CD4-positive, alpha-beta T cell (primary cell): ENCODE measurements at regions of chr4 and their contacts with region 1.

Region 1: GRCh38 chr4:674172-675035 is at the starts of genes ATP5ME and MYL5:
- DNase-seq: peak; percentile 96 to 99 (median 97)
- ATAC-seq: peak; percentile 91
- H3K4me3 ChIP-seq: peak within 1 kb of the TSS; percentile 88
- H3K4me3 Mint-ChIP-seq: peak within 1 kb of the TSS; percentile 96
- H3K27ac ChIP-seq: peak within 1 kb of the TSS; percentile 85 to 98
- H3K27ac Mint-ChIP-seq: peak within 1 kb of the TSS; percentile 87
- H3K4me1 ChIP-seq: peaks cover 21% of the 10 kb centered on the region
- H3K4me1 Mint-ChIP-seq: peaks cover 4% of the 10 kb centered on the region
- H3K27me3 ChIP-seq: no peaks in the 10 kb centered on the region
- H3K27me3 Mint-ChIP-seq: no peaks in the 10 kb centered on the region
- CTCF ChIP-seq: peak; percentile 90
- total RNA-seq, gene ATP5ME: 109 to 126 TPM
- total RNA-seq, gene MYL5: 25.3 to 29.2 TPM

Region 2: DNA sequence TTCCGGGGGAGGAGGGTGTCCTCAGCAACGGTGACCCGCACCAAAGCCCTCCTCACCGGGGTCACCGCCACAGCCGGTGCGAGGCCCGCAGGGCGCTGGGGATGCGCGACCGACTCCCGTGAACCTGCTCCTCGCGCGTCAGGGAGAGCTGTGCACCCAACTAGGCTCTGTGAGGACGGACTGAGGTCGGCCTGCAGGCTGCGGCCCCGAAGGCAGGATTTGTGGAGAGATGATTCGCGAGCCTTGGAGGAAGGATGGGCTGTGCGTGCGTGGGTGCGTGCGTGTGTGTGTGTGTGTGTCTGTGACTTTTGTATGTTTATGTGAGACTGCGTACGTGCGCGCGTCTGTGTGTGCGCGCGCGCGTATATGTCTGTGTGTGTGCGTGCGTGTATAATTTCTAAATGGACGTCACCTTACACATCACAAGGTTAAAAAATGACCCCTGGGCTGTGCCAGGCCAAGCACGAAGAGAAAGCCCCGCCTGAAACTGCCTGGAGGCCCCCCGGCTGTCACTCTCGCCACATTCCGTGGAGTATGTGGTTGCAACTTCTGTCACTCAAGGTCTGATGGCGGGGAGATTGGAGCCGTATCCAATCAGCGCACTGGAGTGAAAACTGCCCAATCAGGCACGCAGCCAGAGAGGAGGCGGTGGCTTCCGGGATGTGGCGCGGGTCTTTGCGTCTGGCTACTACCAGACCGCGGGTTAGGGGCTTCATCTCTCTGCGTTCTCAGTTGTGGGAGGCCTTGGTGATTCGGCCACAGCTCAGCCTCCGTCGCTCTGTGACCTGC is 337.1 kb before region 1 on chr4 and contains the start of gene ZNF141:
- CTCF ChIA-PET with region 1: no interaction called
- POLR2A ChIA-PET with region 1: interaction called, 11 read pairs
- intact Hi-C with region 1: loop called in 1 of 2 experiments (anchors 5 kb)
- DNase-seq: peak; percentile 81 to 97 (median 87)
- ATAC-seq: peak; percentile 87
- H3K4me3 ChIP-seq: peak within 1 kb of the TSS; percentile 98
- H3K4me3 Mint-ChIP-seq: peak within 1 kb of the TSS; percentile 94
- H3K27ac ChIP-seq: peak within 1 kb of the TSS; percentile 85 to 91
- H3K27ac Mint-ChIP-seq: peak within 1 kb of the TSS; percentile 98
- H3K4me1 ChIP-seq: peaks cover 27% of the 10 kb centered on the region
- H3K4me1 Mint-ChIP-seq: peaks cover 51% of the 10 kb centered on the region
- H3K27me3 ChIP-seq: no peaks in the 10 kb centered on the region
- H3K27me3 Mint-ChIP-seq: no peaks in the 10 kb centered on the region
- CTCF ChIP-seq: no peak
- total RNA-seq, gene ZNF141: 13.6 to 13.7 TPM

Region 3: DNA sequence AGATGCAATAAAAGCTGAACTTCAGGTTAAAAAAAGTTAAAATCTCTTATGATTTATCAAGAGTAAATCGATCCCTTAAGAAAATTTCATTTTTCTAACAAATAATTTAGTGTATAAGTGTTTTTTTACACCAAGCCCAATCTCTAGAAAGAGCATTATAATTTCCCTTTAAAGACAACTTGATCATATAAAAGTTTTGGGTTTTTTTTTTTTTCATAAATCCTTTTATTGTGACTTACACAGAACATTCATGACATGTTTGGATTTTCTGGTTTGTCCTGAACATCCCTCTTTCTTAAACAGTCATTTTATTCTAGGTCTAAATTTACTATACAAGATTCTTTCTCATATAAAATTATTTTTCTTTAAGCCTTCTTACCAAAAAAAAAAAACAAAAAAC is 182.0 kb before region 1 on chr4:
- CTCF ChIA-PET with region 1: no interaction called
- POLR2A ChIA-PET with region 1: no interaction called
- intact Hi-C with region 1: no loop called
- DNase-seq: no peak
- ATAC-seq: no peak
- H3K4me3 ChIP-seq: no peak overlapping the region
- H3K4me3 Mint-ChIP-seq: no peak overlapping the region
- H3K27ac ChIP-seq: no peak overlapping the region
- H3K27ac Mint-ChIP-seq: no peak overlapping the region
- H3K4me1 ChIP-seq: peaks cover 6% of the 10 kb centered on the region
- H3K4me1 Mint-ChIP-seq: peaks cover 5% of the 10 kb centered on the region
- H3K27me3 ChIP-seq: no peaks in the 10 kb centered on the region
- H3K27me3 Mint-ChIP-seq: no peaks in the 10 kb centered on the region
- CTCF ChIP-seq: no peak

Region 4: DNA sequence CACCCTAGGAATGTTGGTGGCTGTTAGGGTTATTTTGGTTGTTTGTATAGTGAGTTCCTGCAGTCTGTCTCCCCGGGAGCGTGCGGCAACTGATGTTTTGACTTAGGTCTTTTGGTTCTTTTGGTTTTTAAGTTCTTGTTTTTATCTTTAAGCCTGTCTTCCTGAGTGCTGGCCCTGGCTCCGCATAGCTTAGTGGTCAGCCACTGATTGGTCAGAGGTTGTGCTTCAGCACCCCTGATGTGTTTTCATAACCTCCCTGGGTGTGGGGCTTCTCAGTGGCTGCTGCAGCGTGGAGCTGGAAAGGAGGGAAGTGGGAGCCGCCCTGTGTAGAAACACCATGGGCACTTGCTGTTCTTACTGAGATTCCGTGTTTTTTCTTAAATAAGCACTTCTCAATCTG is 170.3 kb before region 1 on chr4:
- CTCF ChIA-PET with region 1: no interaction called
- POLR2A ChIA-PET with region 1: no interaction called
- intact Hi-C with region 1: loop called in 1 of 2 experiments (anchors 5 kb)
- DNase-seq: no peak
- ATAC-seq: no peak
- H3K4me3 ChIP-seq: no peak overlapping the region
- H3K4me3 Mint-ChIP-seq: no peak overlapping the region
- H3K27ac ChIP-seq: no peak overlapping the region
- H3K27ac Mint-ChIP-seq: no peak overlapping the region
- H3K4me1 ChIP-seq: peaks cover 31% of the 10 kb centered on the region
- H3K4me1 Mint-ChIP-seq: peaks cover 58% of the 10 kb centered on the region
- H3K27me3 ChIP-seq: no peaks in the 10 kb centered on the region
- H3K27me3 Mint-ChIP-seq: no peaks in the 10 kb centered on the region
- CTCF ChIP-seq: no peak

Region 5: DNA sequence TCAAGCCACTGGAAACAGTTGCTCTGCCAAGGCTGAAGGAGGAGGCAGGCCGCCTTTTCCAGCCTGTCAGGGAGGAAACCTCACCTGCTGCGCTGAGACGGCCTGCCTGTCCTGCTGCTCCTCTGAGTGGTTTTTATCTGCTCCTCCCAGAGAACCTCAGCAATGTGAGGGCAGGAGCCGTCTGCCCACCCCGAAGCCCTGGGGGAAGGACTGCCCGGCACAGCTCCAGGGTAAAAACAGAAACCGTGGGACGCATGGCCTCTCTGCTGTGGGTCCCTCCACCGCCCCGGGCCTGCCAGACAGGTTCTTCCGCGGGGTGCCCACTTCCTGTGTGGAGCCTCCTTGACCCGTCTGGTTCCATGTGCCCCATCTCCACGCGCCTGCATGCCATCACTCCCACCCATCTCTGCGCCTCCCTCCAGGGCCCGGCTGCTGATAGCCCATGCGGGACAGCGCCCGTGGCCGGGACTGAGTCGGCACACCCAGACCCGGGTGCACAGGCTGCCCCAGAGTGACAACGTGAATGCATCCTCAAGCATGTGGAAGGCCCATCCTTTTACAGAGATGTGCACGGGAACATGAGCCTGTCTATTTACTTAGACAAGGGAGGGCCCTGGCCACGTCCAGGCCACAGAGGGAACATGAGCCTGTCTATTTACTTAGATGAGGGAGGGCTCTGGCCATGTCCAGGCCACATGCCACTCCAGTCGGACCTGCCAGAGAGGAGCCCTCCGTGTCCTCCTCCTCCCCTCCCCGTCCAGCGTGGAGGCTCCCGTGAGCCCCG is 18.6 kb after region 1 on chr4:
- CTCF ChIA-PET with region 1: no interaction called
- POLR2A ChIA-PET with region 1: no interaction called
- intact Hi-C with region 1: no loop called
- DNase-seq: no peak
- ATAC-seq: no peak
- H3K4me3 ChIP-seq: no peak overlapping the region
- H3K4me3 Mint-ChIP-seq: no peak overlapping the region
- H3K27ac ChIP-seq: no peak overlapping the region
- H3K27ac Mint-ChIP-seq: no peak overlapping the region
- H3K4me1 ChIP-seq: peaks cover 9% of the 10 kb centered on the region
- H3K4me1 Mint-ChIP-seq: no peaks in the 10 kb centered on the region
- H3K27me3 ChIP-seq: peaks cover 5 to 15% of the 10 kb centered on the region in 2 experiments
- H3K27me3 Mint-ChIP-seq: peaks cover 18% of the 10 kb centered on the region
- CTCF ChIP-seq: no peak

Region 6: DNA sequence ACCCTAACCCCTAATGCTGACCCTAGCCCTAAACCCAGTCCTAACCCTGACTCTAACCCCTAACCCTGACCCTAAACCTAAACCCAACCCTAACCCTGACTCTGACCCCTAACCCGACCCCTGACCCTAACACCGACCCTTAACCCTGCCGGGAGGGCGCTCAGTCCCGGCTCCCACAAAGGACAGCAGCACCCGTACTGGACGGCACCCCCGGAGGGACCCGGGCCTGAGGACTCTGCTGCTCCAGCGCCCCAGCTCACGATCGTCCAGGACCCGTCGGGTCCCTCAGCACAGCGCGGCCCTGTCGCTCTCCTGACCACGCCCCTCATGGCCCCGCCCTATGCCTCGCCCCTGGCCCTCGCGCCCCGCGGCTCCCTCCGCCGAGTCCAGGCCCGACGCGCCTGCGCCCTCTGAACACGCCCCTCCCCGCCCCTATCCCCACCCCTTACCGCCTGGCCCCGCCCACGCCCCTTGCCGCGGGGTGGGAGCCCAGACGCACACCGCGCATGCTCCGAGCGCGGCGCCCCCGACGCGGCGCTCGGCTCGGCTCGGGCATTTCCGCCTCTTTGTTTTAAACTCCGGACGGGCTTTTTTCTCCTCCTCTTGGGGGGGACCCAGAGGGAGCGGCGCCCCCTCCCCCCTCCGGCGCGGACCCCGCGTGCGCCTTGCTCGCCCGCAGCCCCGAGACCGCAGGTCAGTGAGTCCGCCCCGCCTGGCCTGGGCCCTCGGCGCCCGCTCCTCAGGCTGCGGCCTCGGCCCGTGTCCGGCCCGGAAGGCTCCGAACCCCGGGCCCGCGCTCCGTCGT is 31.1 kb after region 1 on chr4 and contains the start of gene PCGF3:
- CTCF ChIA-PET with region 1: no interaction called
- POLR2A ChIA-PET with region 1: interaction called, 3 read pairs
- intact Hi-C with region 1: loop called (anchors 1 to 2 kb)
- DNase-seq: peak; percentile 93 to 99 (median 96)
- ATAC-seq: peak; percentile 95
- H3K4me3 ChIP-seq: peak within 1 kb of the TSS; percentile 77
- H3K4me3 Mint-ChIP-seq: peak within 1 kb of the TSS; percentile 90
- H3K27ac ChIP-seq: peak within 1 kb of the TSS; percentile 58 to 68
- H3K27ac Mint-ChIP-seq: peak within 1 kb of the TSS; percentile 69
- H3K4me1 ChIP-seq: peaks cover 36% of the 10 kb centered on the region
- H3K4me1 Mint-ChIP-seq: peaks cover 25% of the 10 kb centered on the region
- H3K27me3 ChIP-seq: no peaks in the 10 kb centered on the region
- H3K27me3 Mint-ChIP-seq: no peaks in the 10 kb centered on the region
- CTCF ChIP-seq: no peak
- total RNA-seq, gene PCGF3: 45.1 to 48.6 TPM

Region 7: GRCh38 chr4:931960-932712 is 257.7 kb after region 1 on chr4 and contains the starts of genes GAK and TMEM175:
- CTCF ChIA-PET with region 1: no interaction called
- POLR2A ChIA-PET with region 1: interaction called, 7 read pairs
- intact Hi-C with region 1: loop called in 1 of 2 experiments (anchors 5 kb)
- DNase-seq: peak; percentile 91 to 99 (median 96)
- ATAC-seq: peak; percentile 90
- H3K4me3 ChIP-seq: peak within 1 kb of the TSS; percentile 97
- H3K4me3 Mint-ChIP-seq: peak within 1 kb of the TSS; percentile 98
- H3K27ac ChIP-seq: peak within 1 kb of the TSS; percentile 75 to 89
- H3K27ac Mint-ChIP-seq: peak within 1 kb of the TSS; percentile 98
- H3K4me1 ChIP-seq: peaks cover 43% of the 10 kb centered on the region
- H3K4me1 Mint-ChIP-seq: peaks cover 42% of the 10 kb centered on the region
- H3K27me3 ChIP-seq: no peaks in the 10 kb centered on the region
- H3K27me3 Mint-ChIP-seq: no peaks in the 10 kb centered on the region
- CTCF ChIP-seq: no peak
- total RNA-seq, gene GAK: 130 to 131 TPM
- total RNA-seq, gene TMEM175: 51.3 to 57.7 TPM

Region 8: DNA sequence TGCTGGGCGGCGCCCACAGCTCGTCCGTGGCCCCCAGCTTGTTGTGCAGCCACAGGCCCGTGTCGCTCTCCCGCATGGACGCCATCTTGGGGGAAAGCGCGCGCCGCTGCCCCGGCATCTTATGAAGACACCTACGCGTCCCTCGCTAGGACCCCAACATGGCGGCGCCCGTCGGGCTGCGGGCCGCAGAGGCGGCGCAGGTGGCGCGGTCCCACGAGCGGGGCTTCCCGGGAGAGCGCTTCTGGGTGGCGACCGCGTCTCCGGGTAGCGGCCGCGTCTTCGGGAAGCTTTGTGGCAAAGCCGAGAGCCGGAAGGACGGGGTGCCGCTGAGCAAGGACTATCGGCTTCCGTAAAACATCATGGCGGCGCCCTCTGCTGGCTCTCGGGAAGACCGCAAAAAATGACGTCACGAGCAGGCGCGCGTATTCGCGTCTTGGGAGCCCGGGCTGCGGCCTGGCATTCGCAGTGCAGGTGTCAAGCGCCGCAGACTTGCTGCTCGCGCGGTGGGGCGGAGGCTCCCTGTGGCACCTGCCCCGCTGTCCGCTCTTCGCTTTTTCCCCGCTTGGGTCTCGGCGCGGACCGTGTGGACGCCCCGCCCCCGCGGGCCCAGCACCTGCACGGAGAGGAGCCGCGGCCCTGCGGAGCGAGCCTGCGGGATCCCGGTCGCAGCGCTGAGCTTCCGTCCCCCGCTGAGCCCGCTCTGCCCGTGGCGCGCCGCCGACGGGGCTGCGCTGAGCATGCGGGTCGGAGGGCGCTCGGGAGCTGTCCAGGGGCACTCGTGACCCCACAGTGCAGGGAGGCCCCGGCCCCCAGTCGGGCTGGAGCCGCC is 1334.7 kb after region 1 on chr4 and contains the start of gene NELFA:
- CTCF ChIA-PET with region 1: no interaction called
- POLR2A ChIA-PET with region 1: no interaction called
- intact Hi-C with region 1: loop called in 1 of 2 experiments (anchors 10 kb)
- DNase-seq: peak; percentile 93 to 98 (median 95)
- ATAC-seq: peak; percentile 79
- H3K4me3 ChIP-seq: peak within 1 kb of the TSS; percentile 87
- H3K4me3 Mint-ChIP-seq: peak within 1 kb of the TSS; percentile 98
- H3K27ac ChIP-seq: peak within 1 kb of the TSS; percentile 97 to 99
- H3K27ac Mint-ChIP-seq: peak within 1 kb of the TSS; percentile 95
- H3K4me1 ChIP-seq: peaks cover 31% of the 10 kb centered on the region
- H3K4me1 Mint-ChIP-seq: peaks cover 39% of the 10 kb centered on the region
- H3K27me3 ChIP-seq: no peaks in the 10 kb centered on the region
- H3K27me3 Mint-ChIP-seq: no peaks in the 10 kb centered on the region
- CTCF ChIP-seq: no peak
- total RNA-seq, gene NELFA: 39.9 to 40.1 TPM